Common myeloid progenitor, CD34-positive (primary cell): ENCODE measurements at regions of chr3 and their contacts with region 1.

Region 1: DNA sequence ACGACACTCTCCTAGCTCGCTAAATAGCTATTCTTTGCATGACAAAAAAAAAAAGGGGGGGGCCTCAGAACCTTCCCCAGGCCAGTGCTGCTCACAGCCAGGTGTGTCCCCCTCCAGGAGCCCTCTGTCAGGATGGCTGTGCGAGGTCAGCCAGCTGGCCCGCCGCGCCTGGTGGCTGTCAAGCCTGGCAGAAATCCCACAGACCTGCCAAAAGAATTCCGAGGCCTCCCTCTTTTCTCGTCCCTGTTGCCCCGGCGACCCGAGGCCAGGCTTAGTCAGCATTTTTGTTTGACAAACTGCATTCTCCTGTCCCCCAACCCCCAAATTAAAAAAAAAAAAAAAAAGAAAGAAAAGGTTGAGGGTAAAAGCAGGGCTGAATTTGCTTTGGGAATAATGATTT is 61.9 kb downstream of the TM4SF4 start:
- DNase-seq: no peak
- H3K4me3 ChIP-seq: no peak overlapping the region
- H3K27ac ChIP-seq: no peak overlapping the region
- H3K4me1 ChIP-seq: peaks cover 0 to 13% (median 9%) of the 10 kb centered on the region in 4 experiments
- H3K27me3 ChIP-seq: no peaks in the 10 kb centered on the region

Region 2: DNA sequence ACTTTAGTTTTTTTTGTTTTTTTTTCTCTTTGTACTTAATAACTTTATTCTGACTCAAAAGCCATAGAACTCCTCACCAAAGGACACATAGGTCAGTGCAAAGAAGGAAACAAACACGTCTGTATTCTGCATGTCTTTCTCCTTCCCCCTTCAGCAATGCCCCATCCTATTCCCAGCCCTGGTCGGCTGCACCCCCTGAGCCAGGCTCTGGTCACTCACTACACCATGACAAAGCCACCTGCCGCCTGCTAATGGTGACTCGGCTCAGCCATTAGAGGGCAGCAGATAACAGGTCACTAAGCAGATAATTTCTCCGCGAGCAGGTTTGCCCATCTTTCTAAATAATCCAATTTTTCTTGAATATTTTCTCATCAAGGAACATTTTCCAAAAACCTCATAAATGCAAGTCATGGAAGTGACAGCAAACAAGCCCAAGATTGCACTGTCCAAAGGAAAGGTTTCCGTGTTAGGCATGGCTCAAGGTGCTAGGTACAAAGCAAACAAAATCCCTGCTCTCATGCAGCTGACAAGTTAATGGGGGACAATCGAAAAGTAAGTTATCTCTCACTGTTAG is 24.1 kb before region 1 on chr3:
- CTCF ChIA-PET with region 1: interaction called, 17 read pairs
- POLR2A ChIA-PET with region 1: no interaction called
- DNase-seq: peak; percentile 55 to 69 (median 68)
- H3K4me3 ChIP-seq: peak overlapping the region in 1 of 7 experiments; percentile 26
- H3K27ac ChIP-seq: no peak overlapping the region
- H3K4me1 ChIP-seq: peaks cover 0 to 29% (median 23%) of the 10 kb centered on the region in 4 experiments
- H3K27me3 ChIP-seq: no peaks in the 10 kb centered on the region

Region 3: GRCh38 chr3:149519912-149520311 is 16.5 kb before region 1 on chr3:
- CTCF ChIA-PET with region 1: interaction called, 10 read pairs
- POLR2A ChIA-PET with region 1: no interaction called
- DNase-seq: no peak
- H3K4me3 ChIP-seq: no peak overlapping the region
- H3K27ac ChIP-seq: no peak overlapping the region
- H3K4me1 ChIP-seq: no peaks in the 10 kb centered on the region
- H3K27me3 ChIP-seq: no peaks in the 10 kb centered on the region

Region 4: GRCh38 chr3:149560001-149560400 is 23.6 kb after region 1 on chr3:
- CTCF ChIA-PET with region 1: no interaction called
- POLR2A ChIA-PET with region 1: no interaction called
- DNase-seq: no peak
- H3K4me3 ChIP-seq: no peak overlapping the region
- H3K27ac ChIP-seq: no peak overlapping the region
- H3K4me1 ChIP-seq: peaks cover 0 to under 1% (median 0%) of the 10 kb centered on the region in 4 experiments
- H3K27me3 ChIP-seq: no peaks in the 10 kb centered on the region